Dendritic cell treated with granulocyte-macrophage colony-stimulating factor and Interleukin-4, amounts not matched to agents 40 ng/mL and 50 ng/mL, for 4 days (primary cell): ENCODE measurements at regions of chr2 and their contacts with region 1.

Region 1: DNA sequence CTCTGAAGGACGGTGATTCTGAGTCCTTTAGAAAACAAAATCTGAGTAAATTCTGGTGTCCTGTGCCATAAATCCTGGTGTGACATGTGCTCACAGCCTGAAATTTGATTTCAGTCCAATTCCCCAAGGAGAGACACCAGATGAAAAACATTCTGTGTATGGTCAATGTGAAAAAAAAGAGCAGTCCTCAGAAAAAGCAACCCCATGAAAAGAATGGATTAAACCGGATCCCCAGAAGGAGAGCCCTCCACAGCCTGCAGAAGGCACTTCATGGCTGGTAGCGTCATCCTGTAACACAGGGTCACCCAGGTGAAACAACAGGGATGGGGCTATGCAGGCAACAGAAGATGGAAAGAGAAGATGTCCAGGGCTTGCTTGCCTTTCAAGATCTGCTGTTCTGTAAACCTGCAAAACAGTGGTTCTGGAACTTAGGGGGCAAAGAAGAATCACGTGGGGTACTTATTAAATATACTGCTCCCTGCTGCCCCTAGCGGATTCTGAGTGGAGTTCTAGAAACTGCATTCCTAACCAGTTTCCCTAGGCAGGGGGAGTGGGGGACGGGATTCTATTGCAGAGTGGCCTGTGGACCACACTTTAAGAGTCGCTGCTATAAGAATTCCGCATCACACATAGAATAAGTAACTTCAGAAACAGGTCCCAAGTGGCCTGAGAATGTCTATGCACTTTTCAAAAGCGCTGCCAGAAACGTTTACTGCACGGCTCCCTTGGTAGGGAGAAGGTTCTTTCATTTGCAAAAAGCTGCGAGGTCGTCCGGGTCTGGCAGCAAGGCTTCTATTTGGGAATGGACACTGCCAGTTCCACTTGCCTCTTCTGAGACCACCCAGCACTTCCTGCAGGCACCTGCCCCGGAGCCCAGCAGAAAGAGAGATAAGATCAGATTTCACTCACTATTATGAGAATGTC is 118.9 kb upstream of the ARL5A start:
- H3K4me3 Mint-ChIP-seq: peak overlapping the region; percentile 71
- H3K27ac Mint-ChIP-seq: peak overlapping the region; percentile 83
- H3K4me1 Mint-ChIP-seq: peaks cover 50% of the 10 kb centered on the region
- H3K27me3 Mint-ChIP-seq: no peaks in the 10 kb centered on the region

Region 2: DNA sequence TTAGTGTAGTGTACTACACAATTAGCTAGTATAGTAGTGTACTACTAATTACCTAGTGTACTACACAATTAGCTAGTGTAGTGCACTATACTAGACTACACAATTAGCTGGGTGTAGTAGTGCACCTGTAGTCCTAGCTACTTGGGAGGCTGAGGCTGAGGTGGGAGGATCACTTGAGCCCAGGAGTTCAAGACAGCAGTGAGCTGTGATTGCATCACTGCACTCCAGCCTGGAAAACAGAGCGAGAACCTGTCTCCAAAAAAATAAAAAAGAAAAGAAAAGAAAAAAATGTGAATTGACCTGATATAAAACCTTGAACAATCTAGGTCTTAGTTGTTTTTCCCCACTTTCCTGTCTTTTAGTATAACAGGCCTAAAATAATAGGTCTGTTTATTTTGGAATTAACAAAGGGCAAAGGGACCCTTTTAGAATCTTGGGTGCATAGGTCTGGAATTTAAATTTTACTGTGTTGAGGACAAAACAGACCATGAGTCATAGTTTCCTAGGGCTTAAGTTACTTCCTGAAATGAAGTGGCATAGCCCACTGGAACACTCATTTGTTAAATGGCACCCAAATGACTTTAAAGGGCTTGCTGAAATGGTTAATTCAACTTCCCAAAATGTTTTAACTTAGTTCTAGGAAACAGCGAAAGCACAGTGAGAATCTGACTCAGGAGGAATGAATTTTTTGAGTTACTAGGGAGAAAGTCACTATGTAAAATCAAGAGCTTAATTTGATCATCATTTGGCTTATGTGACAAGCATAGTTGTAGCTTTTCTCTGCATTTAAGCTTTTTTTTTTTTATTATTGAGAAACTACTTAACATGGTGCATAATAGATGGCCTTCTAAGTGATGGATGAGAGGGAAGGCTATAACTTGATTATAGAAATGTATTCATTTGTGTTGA is 68.3 kb before region 1 on chr2:
- intact Hi-C with region 1: loop called (anchors 10 kb)
- H3K4me3 Mint-ChIP-seq: no peak overlapping the region
- H3K27ac Mint-ChIP-seq: peak overlapping the region; percentile 62
- H3K4me1 Mint-ChIP-seq: peaks cover 32% of the 10 kb centered on the region
- H3K27me3 Mint-ChIP-seq: no peaks in the 10 kb centered on the region

Region 3: GRCh38 chr2:152106464-152106863 is 159.3 kb after region 1 on chr2:
- intact Hi-C with region 1: no loop called
- H3K4me3 Mint-ChIP-seq: no peak overlapping the region
- H3K27ac Mint-ChIP-seq: no peak overlapping the region
- H3K4me1 Mint-ChIP-seq: no peaks in the 10 kb centered on the region
- H3K27me3 Mint-ChIP-seq: peaks cover 7% of the 10 kb centered on the region